Cardiac septum (tissue), 1 donor: ENCODE measurements at regions of chr18 and their contacts with region 1.

Region 1: GRCh38 chr18:12092398-12093229 is 1.0 kb upstream of the ANKRD62 start:
- DNase-seq: no peak

Region 2: GRCh38 chr18:11669271-11669947 is 423.2 kb before region 1 on chr18:
- intact Hi-C with region 1: no loop called
- DNase-seq: no peak

Region 3: DNA sequence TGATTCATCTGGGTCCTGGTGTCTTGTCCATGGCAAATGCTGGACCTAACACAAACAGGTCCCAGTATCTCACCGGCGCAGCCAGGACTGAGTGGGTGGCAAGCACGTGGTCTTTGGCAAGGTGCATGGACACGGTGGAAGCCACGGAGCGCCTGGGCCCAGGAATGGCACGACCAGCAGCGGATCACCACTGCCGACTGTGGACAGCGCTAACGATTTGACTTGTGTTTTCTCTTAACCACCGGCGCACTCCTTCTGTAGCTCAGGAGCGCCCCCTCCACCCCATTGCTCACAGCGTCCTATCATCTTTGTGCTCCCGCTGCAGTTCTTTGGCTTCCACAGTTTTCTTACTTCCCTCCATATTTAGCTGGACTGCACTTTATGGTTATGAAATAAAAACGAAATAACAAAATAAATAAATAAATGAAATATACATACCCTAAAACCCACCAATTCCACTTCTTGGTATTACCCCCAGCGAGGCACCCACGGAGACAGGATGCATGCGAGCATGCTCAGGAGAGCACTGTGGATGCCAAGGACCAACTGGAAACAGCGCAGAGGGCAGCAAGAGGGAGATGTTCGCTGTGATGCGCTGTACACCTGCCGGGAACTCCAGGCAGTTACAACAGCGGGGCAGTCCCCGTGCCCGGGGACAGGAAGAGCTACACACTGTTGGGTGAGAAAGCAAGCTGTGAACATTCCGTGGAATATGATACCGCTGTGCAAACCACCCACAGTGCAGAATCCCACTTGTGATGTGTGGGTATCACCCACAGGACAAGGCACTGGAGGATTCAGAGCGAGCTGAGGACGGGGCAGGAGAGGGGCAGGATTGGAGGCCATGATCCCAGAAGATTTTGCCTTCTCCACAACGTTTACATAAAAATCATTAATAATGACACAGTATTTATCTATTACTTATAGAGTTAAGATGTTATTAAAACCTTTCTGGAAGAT is 154.5 kb after region 1 on chr18:
- intact Hi-C with region 1: loop called (anchors 10 kb)
- DNase-seq: peak; percentile 64